K562 (cell line): ENCODE measurements at regions of chr2 and their contacts with region 1.

Region 1: DNA sequence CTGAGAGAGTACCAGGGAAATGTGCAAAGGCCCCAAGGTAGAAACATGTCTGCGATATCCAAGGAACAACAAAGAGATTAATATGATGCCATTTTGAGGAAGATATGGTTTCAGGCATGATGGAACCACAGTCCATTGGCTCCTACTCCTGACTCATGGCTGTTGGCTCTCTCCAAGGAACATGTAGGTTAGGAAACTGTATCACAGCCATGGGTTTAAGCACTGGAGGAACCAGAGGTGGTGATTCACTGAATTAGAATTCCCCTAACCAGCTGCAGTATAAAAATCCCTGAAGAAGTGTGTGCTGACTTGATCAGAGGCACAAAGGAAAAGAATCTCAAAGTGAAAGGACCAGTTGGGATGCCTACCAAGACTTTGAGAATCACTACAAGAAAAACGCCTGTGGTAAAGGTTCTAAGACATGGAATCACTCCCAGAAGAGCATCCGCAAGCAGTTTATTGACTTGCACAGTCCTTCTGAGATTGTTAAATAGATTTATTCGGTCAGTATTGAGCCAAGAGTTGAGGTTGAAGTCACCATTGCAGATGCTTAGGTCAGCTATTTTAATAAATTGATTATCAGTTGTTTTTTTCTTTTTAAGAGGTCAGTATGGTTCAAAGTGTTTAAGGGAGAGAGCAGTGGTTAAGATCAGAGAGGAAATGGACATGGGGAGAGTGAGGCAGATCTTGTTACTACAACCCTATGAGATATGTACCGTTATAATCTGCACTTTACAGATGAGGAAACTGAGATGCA is 110.7 kb upstream of the OTX1 start:
- DNase-seq: no peak
- ATAC-seq: no peak
- H3K4me3 ChIP-seq: no peak overlapping the region
- H3K27ac ChIP-seq: no peak overlapping the region
- H3K4me1 ChIP-seq: no peaks in the 10 kb centered on the region
- H3K27me3 ChIP-seq: no peaks in the 10 kb centered on the region
- CTCF ChIP-seq: no peak
- EP300 ChIP-seq: no peak
- POLR2A ChIP-seq: no peak
- RAD21 ChIP-seq: no peak

Region 2: DNA sequence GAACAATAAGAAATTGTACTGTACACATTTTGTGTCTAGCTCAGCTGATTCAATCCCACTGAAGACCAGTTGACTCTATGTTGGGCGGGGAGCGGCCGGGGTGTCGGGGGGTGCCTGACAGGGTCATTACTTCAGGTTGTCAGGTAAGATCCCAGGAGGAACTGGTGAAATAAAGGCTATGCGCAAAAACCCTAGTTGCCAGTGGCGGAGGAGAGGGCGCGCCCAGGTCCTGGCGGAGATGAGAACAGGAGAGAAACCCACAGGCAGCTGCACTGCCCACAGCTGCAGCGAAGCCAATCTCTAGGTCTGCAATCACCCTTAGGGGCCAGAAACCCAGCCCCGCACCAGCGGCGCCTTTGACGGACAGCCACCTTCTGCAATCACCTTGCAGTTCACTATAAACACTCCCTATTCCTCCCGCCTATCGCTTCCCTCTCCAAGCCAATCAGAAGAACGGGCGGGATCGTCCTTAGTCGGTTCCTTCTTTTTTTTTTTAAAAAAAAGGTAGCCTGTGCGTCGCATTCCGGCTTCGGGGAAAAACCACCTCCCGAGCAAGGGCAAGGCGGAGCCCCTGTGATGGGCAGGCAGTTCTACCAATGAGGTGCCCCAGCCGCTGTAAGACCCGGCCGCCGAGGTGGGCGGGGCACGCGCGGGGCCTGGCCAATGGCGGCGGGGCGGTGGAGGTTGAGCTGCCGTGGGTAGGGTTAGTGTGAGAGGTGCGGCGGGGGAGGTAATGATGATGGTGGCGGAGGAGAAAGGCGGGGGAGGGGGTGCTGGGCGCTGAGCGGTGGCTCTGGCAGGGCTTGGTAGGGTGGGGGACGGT is 234.7 kb before region 1 on chr2 and contains the start of gene EHBP1:
- CTCF ChIA-PET with region 1: no interaction called
- POLR2A ChIA-PET with region 1: no interaction called
- in situ Hi-C with region 1: no loop called
- intact Hi-C with region 1: no loop called
- DNase-seq: peak; percentile 99 to 100 (median 100)
- ATAC-seq: peak; percentile 96
- H3K4me3 ChIP-seq: peak within 1 kb of the TSS; percentile 57
- H3K27ac ChIP-seq: peak within 1 kb of the TSS; percentile 69
- H3K4me1 ChIP-seq: peaks cover 0 to 20% of the 10 kb centered on the region in 2 experiments; a peak in 2 of 5 replicates
- H3K27me3 ChIP-seq: no peaks in the 10 kb centered on the region
- CTCF ChIP-seq: no peak
- EP300 ChIP-seq: peak; percentile 7; the same call in 1 of the 2 replicates
- POLR2A ChIP-seq: peak; percentile 81
- RAD21 ChIP-seq: 0 out of 4 replicates have a peak, but pooled peaks of 1 of the 2 experiments have one; percentile 11
- polyA plus RNA-seq, gene EHBP1: 8.9 to 9.6 TPM

Region 3: DNA sequence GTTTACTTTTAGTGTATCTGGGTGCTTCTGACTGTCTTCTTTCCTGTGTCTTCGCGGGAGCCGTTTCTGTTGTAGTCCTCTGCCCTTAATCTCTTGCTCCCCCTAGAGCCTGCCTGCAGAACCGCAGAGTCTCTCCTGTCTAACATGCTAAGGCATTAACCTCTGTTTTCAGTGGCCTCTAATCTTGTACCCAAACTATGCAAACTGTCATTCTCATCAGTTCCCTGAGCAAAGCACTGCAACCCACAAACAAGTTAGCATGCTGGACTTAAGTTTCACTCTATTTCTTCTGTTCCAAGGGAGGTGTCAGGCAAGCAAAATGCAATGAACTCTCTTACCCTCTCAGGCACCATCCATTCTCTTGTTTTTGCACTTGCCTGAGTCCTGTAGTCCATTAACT is 249.1 kb after region 1 on chr2:
- CTCF ChIA-PET with region 1: no interaction called
- POLR2A ChIA-PET with region 1: no interaction called
- in situ Hi-C with region 1: loop called (anchors 25 kb)
- intact Hi-C with region 1: loop called (anchors 5 kb)
- DNase-seq: peak; percentile 20 to 65 (median 44)
- ATAC-seq: peak; percentile 98
- H3K4me3 ChIP-seq: no peak overlapping the region
- H3K27ac ChIP-seq: no peak overlapping the region
- H3K4me1 ChIP-seq: no peaks in the 10 kb centered on the region
- H3K27me3 ChIP-seq: peaks cover 0 to 4% of the 10 kb centered on the region in 2 experiments; a peak in 1 of 5 replicates
- CTCF ChIP-seq: peak; percentile 78 to 84 (median 81)
- EP300 ChIP-seq: no peak
- POLR2A ChIP-seq: no peak
- RAD21 ChIP-seq: peak; percentile 13 to 77; a peak in 2 of 4 replicates

Region 4: DNA sequence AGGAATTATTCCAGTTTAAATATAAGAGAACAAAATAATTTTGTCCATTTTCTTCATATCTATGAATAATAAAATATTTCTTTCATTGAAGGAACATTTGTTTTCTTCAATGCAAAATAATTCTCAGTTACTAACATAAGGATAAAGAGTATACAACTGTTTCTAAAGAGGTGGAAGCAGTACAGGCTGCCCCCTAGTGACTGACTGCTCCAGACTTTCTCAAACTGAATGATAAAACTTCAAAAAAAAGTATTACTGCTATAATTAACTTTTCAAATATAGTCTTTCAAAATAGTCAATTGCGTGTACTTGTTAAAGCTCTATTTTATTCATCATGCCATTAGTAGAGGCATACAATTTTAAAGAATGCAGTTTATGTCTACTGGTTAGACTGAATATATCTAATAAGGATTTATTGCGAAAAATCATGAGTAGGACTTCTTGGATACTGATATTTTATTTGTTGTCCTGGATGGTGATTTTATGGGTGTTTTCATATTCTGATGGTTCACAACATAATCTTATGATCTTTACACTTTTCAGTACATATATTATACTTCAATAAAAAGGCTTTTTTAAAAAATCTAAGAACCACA is 548.3 kb after region 1 on chr2:
- CTCF ChIA-PET with region 1: interaction called, 5 read pairs
- POLR2A ChIA-PET with region 1: no interaction called
- in situ Hi-C with region 1: no loop called
- intact Hi-C with region 1: loop called (anchors 5 kb)
- DNase-seq: peak; percentile 8 to 35 (median 12)
- ATAC-seq: peak; percentile 52; the same call in 1 of the 3 replicates
- H3K4me3 ChIP-seq: no peak overlapping the region
- H3K27ac ChIP-seq: no peak overlapping the region
- H3K4me1 ChIP-seq: no peaks in the 10 kb centered on the region
- H3K27me3 ChIP-seq: no peaks in the 10 kb centered on the region
- CTCF ChIP-seq: peak; percentile 16 to 66 (median 46); a peak in 4 of 6 replicates
- EP300 ChIP-seq: no peak
- POLR2A ChIP-seq: no peak
- RAD21 ChIP-seq: peak; percentile 56 to 67